Spleen (tissue), 13 donors: ENCODE measurements at regions of chr17 and their contacts with region 1.

Region 1: DNA sequence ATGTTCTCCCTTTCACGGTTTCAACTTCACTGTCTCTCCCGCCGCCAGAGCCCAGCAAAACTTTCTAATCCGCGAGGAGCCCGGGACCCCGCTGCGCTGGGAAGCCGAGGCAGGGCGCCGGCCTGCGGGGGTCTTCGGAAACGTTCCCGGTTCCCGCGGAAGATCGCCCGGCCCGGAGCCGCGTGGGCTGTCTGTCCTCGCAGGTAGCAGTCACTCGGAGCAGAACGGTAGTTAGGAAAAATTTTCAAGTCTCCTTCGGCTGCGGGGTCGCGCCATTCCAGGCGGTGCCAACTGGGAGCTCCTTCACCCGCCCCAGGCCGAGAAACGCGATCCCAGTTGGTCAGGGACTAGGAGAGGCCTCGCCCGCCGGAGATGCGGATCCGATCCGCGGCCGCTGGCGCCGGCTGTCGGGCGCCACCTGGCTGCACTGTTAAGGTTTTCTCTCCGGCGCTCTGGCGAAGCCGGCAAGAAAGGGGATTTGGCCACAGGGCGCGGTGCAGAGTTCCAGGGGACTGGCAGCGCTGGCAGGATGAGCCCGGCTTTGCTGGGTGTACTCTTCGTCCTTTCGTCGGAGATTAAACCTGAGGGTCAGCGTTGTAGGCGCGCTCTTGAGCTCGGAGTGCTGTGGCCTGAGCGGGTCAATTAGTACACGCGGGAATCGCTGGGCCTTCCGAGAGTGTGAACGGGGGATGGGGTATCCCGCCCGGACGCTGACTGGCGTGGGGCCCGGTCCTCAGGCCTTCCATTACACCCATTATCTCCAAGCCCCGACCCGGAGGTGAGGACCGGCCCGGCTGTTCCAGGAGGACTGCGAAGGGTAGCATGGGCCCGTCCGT is 135.4 kb downstream of the KCNJ12 start:
- DNase-seq: peak; percentile 95
- H3K4me3 ChIP-seq: peak overlapping the region; percentile 39 to 70 (median 48)
- H3K27ac ChIP-seq: peak overlapping the region; percentile 27 to 79 (median 64)
- H3K4me1 ChIP-seq: peaks cover 0 to 32% (median 20%) of the 10 kb centered on the region in 6 donors
- H3K27me3 ChIP-seq: peaks cover 0 to 23% (median 6%) of the 10 kb centered on the region in 7 donors
- CTCF ChIP-seq: peak in 10 of 11 experiments; percentile 37 to 91 (median 84)
- POLR2A ChIP-seq: no peak

Region 2: GRCh38 chr17:21119247-21119918 is 392.2 kb before region 1 on chr17:
- intact Hi-C with region 1: loop called (anchors 5 kb)
- DNase-seq: peak; percentile 89
- H3K4me3 ChIP-seq: no peak overlapping the region
- H3K27ac ChIP-seq: peak overlapping the region in 6 of 8 donors; percentile 26 to 62 (median 50)
- H3K4me1 ChIP-seq: peaks cover 0 to 24% (median 16%) of the 10 kb centered on the region in 6 donors
- H3K27me3 ChIP-seq: peaks cover 0 to 6% (median 0%) of the 10 kb centered on the region in 7 donors
- CTCF ChIP-seq: peak; percentile 68 to 91 (median 87)
- POLR2A ChIP-seq: no peak

Region 3: GRCh38 chr17:21457051-21458026 is 54.2 kb before region 1 on chr17:
- intact Hi-C with region 1: loop called (anchors 2 kb)
- DNase-seq: peak; percentile 95
- H3K4me3 ChIP-seq: no peak overlapping the region
- H3K27ac ChIP-seq: peak overlapping the region in 2 of 8 donors; percentile 4 to 26
- H3K4me1 ChIP-seq: peaks cover 0 to 25% (median 19%) of the 10 kb centered on the region in 6 donors
- H3K27me3 ChIP-seq: peaks cover 0 to 25% (median 0%) of the 10 kb centered on the region in 7 donors
- CTCF ChIP-seq: peak; percentile 79 to 99 (median 95)
- POLR2A ChIP-seq: no peak